Heart left ventricle (tissue), 16 donors: ENCODE measurements at regions of chrX and their contacts with region 1.

Region 1: GRCh38 chrX:25144043-25144940 is 128.5 kb upstream of the ARX start:
- DNase-seq: peak in 4 of 5 donors; percentile 14 to 50 (median 36)
- ATAC-seq: peak in 1 of 4 donors; percentile 58
- H3K4me3 ChIP-seq: peak overlapping the region in 2 of 12 donors; percentile 15 to 32
- H3K27ac ChIP-seq: no peak overlapping the region
- H3K4me1 ChIP-seq: no peaks in the 10 kb centered on the region
- H3K27me3 ChIP-seq: peaks cover 0 to 17% (median 0%) of the 10 kb centered on the region in 9 donors
- CTCF ChIP-seq: peak; percentile 47 to 80 (median 64)
- POLR2A ChIP-seq: no peak

Region 2: DNA sequence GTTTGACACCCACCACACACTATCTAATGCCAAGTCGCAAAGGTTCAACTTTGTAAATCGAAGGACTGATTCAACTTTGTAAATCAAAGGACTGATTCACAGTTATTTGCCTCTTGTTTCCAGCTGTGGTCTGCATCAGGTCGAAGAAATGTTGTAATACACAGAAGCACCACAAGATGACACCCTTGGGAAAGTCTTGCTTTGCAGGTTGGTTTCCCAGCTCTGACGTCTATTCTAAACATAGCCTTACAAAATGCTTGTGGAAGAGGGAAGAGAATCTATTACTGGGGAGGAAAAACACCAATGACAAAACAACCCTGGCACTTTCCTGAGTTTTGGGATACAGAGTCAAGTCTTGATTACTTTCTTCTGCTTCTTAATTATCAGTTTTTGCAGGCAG is 748.5 kb before region 1 on chrX:
- intact Hi-C with region 1: loop called in 2 of 10 experiments (anchors 5 kb)
- DNase-seq: peak in 2 of 5 donors; percentile 38 to 40
- ATAC-seq: peak; percentile 55 to 83 (median 80)
- H3K4me3 ChIP-seq: no peak overlapping the region
- H3K27ac ChIP-seq: peak overlapping the region in 4 of 12 donors; percentile 32 to 47 (median 44)
- H3K4me1 ChIP-seq: peaks cover 0 to 7% (median 0%) of the 10 kb centered on the region in 12 donors
- H3K27me3 ChIP-seq: peaks cover 0 to 20% (median 0%) of the 10 kb centered on the region in 9 donors
- CTCF ChIP-seq: peak; percentile 58 to 78 (median 70)
- POLR2A ChIP-seq: no peak

Region 3: GRCh38 chrX:24741330-24741729 is 403.0 kb before region 1 on chrX:
- intact Hi-C with region 1: loop called in 1 of 10 experiments (anchors 10 kb)
- DNase-seq: no peak
- ATAC-seq: no peak
- H3K4me3 ChIP-seq: no peak overlapping the region
- H3K27ac ChIP-seq: no peak overlapping the region
- H3K4me1 ChIP-seq: no peaks in the 10 kb centered on the region
- H3K27me3 ChIP-seq: no peaks in the 10 kb centered on the region
- CTCF ChIP-seq: no peak
- POLR2A ChIP-seq: no peak

Region 4: GRCh38 chrX:24748202-24748843 is 396.0 kb before region 1 on chrX:
- intact Hi-C with region 1: loop called in 8 of 10 experiments (anchors 2 to 10 kb)
- DNase-seq: no peak
- ATAC-seq: no peak
- H3K4me3 ChIP-seq: no peak overlapping the region
- H3K27ac ChIP-seq: no peak overlapping the region
- H3K4me1 ChIP-seq: no peaks in the 10 kb centered on the region
- H3K27me3 ChIP-seq: peaks cover 0 to 6% (median 0%) of the 10 kb centered on the region in 9 donors
- CTCF ChIP-seq: no peak
- POLR2A ChIP-seq: no peak

Region 5: DNA sequence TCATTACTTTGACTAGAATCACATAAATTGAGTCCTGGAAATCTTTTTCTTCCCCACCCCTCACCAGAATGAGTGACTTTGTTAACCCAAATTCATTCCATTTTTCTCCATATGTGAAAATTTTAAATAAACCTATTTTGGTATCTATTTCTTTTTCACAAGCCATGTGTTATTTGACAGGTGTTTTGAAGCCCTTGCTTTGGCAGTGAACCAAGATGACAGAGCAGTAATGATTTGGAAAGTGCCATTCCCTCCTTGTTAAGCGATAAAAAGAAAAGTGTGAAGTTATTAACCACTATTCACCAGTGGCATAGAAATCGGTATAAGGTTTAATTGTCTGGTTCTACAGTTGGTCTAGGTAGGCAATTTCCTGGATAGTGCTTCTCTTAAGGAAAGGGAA is 384.5 kb before region 1 on chrX:
- intact Hi-C with region 1: loop called in 6 of 10 experiments (anchors 5 kb)
- DNase-seq: no peak
- ATAC-seq: no peak
- H3K4me3 ChIP-seq: no peak overlapping the region
- H3K27ac ChIP-seq: no peak overlapping the region
- H3K4me1 ChIP-seq: peaks cover 0 to 5% (median 0%) of the 10 kb centered on the region in 12 donors
- H3K27me3 ChIP-seq: no peaks in the 10 kb centered on the region
- CTCF ChIP-seq: no peak
- POLR2A ChIP-seq: no peak

Region 6: GRCh38 chrX:24838629-24839028 is 305.7 kb before region 1 on chrX:
- intact Hi-C with region 1: loop called (anchors 2 to 10 kb)
- DNase-seq: no peak
- ATAC-seq: no peak
- H3K4me3 ChIP-seq: no peak overlapping the region
- H3K27ac ChIP-seq: no peak overlapping the region
- H3K4me1 ChIP-seq: no peaks in the 10 kb centered on the region
- H3K27me3 ChIP-seq: peaks cover 0 to 9% (median 0%) of the 10 kb centered on the region in 9 donors
- CTCF ChIP-seq: peak; percentile 35 to 62 (median 52)
- POLR2A ChIP-seq: no peak

Region 7: GRCh38 chrX:25241461-25241860 is 97.2 kb after region 1 on chrX:
- intact Hi-C with region 1: no loop called
- DNase-seq: no peak
- ATAC-seq: no peak
- H3K4me3 ChIP-seq: no peak overlapping the region
- H3K27ac ChIP-seq: no peak overlapping the region
- H3K4me1 ChIP-seq: no peaks in the 10 kb centered on the region
- H3K27me3 ChIP-seq: peaks cover 0 to 3% (median 0%) of the 10 kb centered on the region in 9 donors
- CTCF ChIP-seq: no peak
- POLR2A ChIP-seq: no peak